Sciatic nerve (tissue), 2 donors: ENCODE measurements at regions of chr9 and their contacts with region 1.

Region 1: DNA sequence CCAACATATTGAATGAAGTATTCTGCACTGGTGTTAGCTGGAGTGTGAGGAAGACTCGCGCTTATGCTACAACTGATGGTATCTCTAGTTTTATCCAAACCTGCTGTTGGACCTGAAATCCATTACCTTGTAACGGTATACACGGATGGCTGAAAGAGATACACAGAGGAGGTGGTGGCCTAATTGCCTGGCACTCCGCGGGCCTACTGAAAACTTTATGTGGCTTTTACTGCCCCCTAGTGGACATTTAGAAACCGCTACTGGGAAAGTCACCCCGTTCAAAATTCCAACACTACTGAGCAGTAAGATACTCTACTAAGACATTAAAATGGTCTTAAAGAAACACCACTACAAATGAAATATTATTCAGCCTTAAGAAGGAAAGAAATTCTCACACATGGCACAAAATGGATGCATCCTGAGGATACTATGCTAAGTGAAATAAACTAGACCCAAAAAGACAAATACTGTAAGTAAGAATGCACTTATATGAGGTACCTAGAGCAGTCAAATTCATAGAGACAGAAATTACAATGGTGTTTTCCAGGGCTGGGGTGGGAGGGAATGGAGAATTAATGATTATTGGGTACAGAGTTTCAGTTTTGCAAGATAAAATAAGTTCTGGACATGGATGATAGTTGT is 100.4 kb downstream of the TTLL11 start:
- DNase-seq: no peak
- ATAC-seq: peak; percentile 87

Region 2: DNA sequence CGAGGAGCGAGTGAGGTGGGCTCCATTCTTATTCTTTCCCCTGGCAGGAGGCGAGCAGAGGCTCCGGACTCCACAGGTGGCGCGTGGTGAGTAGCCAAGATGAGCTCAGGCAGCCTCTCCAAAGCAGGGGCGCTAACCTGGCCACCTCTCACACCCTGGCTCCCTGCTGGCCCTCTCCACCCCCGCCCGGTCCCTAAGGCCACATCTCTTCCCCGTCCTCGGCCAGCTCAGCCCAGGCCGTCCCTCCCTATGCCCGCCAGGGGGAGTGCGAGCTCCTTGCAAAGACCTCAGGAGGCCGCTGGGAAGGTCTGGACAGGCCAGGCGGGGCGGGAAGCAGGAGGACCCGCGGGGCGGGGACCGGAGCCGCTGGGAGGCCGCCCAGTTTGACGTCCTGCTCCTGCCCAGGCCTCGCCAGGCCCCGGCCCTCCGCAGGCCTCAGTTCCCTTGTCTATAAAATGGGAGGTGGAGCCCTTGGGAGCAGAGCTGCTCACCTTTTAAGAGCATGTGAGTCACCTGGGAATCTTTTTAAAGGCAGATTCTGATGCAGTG is 446.7 kb before region 1 on chr9:
- intact Hi-C with region 1: loop called (anchors 10 kb)
- DNase-seq: peak; percentile 96
- ATAC-seq: peak; percentile 96